ENCODE measurements at regions of chr13 and their contacts with region 1.

Region 1: DNA sequence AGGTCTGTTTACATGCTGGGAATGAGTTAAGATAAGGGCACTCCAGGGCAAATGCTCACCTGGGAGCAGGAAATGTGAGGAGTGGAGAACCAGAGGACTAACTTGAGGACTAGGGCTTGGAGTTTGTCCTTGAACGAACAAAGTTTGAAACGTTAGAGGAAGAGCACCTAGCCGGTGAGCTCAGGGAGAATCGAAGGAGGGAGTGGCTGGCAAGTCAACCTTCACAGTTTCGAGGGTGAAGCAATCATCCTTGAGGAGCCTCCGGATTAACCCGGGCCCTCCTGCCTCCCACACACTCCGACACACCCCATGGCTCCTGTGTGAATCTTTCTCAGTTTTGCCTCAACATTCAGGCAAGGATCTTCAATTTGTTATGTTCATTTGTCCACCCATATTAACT is 58.6 kb downstream of the LMO7 start:
- DNase-seq: no peak
- ATAC-seq: no peak
- H3K4me3 Mint-ChIP-seq: no peak overlapping the region
- H3K27ac Mint-ChIP-seq: no peak overlapping the region
- H3K4me1 Mint-ChIP-seq: peaks cover 2% of the 10 kb centered on the region
- H3K27me3 Mint-ChIP-seq: no peaks in the 10 kb centered on the region

Region 2: GRCh38 chr13:75675421-75675820 is 19.3 kb before region 1 on chr13:
- CTCF ChIA-PET with region 1: interaction called, 13 read pairs
- POLR2A ChIA-PET with region 1: no interaction called
- DNase-seq: no peak
- ATAC-seq: no peak
- H3K4me3 Mint-ChIP-seq: no peak overlapping the region
- H3K27ac Mint-ChIP-seq: no peak overlapping the region
- H3K4me1 Mint-ChIP-seq: no peaks in the 10 kb centered on the region
- H3K27me3 Mint-ChIP-seq: no peaks in the 10 kb centered on the region

Region 3: DNA sequence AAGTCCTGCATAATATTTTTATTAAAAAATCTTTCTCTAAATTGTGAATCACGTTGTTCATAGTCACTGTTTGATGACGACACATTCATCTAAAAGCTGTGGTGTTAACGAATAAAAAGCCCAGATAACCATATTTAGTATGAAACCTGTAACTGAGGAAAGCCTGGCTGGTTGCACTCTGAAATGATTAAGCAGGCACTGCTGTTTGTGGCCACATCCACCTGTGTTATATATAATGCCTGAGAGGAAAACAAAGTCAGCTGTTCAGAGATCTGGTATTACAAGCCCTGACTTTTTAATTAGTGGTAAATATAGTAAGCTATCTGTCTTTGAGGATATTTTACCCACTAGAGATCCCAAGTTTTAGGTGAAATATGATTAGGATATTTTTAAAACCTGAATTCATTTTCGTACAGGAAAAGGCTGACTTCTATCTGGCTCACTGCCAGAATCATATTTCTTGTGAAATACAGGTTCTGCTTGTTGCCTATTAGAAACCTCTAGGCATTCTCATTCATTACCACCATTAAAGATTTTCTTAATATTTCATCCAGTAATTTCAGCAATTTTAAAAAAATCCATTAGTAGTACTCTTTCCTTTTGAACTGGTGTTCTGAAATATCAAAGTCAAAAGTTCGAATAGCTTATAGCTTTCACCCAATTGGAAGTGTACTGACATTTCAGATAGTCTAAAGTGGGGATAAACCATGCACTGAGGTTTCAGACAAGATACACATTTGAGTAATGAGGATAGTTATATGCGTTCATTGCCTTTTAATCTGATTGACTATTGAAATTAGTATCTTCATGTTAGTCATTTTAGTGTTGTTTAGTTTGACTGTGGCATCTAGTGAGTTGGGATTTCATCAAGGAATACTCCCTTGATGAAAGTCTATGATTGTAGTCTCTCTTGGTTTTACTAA is 21.1 kb after region 1 on chr13:
- CTCF ChIA-PET with region 1: interaction called, 16 read pairs
- POLR2A ChIA-PET with region 1: no interaction called
- DNase-seq: no peak
- ATAC-seq: no peak
- H3K4me3 Mint-ChIP-seq: no peak overlapping the region
- H3K27ac Mint-ChIP-seq: no peak overlapping the region
- H3K4me1 Mint-ChIP-seq: peaks cover 2% of the 10 kb centered on the region
- H3K27me3 Mint-ChIP-seq: no peaks in the 10 kb centered on the region

Region 4: GRCh38 chr13:75769141-75769905 is 74.6 kb after region 1 on chr13:
- CTCF ChIA-PET with region 1: interaction called, 50 read pairs
- POLR2A ChIA-PET with region 1: no interaction called
- DNase-seq: no peak
- ATAC-seq: no peak
- H3K4me3 Mint-ChIP-seq: no peak overlapping the region
- H3K27ac Mint-ChIP-seq: no peak overlapping the region
- H3K4me1 Mint-ChIP-seq: peaks cover 20% of the 10 kb centered on the region
- H3K27me3 Mint-ChIP-seq: no peaks in the 10 kb centered on the region

Region 5: GRCh38 chr13:75811361-75811760 is 116.6 kb after region 1 on chr13:
- CTCF ChIA-PET with region 1: interaction called, 14 read pairs
- POLR2A ChIA-PET with region 1: no interaction called
- DNase-seq: no peak
- ATAC-seq: no peak
- H3K4me3 Mint-ChIP-seq: no peak overlapping the region
- H3K27ac Mint-ChIP-seq: no peak overlapping the region
- H3K4me1 Mint-ChIP-seq: no peaks in the 10 kb centered on the region
- H3K27me3 Mint-ChIP-seq: no peaks in the 10 kb centered on the region

Region 6: DNA sequence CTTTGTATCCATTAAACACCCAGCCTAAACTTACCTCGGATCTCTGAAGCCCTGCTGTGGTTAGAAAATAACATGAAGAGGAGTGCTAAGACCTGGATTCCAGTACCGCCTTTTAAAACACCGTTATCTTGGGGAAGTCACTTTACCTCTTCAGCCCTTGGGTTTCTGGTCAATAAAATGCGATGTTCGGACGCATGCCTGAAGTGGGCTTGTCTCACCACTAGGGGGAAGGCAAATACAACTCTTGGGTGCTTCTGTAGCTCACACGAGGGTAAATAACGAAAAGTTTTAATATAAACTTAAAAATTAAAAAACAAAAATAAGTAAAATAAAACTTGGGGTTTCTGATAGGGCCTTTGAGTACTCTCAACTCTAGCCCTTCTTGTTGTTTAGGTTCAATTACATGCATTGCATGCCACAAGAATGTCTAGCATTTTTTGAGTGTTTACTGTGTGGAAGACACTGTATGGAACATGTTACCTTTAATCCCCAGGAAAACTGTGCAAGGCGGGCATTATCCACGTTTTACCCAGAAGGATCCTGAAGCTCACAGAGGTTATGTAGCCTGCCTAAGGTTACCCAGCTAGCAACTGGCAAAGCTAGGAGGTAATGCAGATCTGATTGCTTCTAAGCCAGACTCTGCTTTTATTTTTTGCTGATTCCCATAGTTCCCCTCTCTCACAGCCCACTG is 181.8 kb after region 1 on chr13:
- CTCF ChIA-PET with region 1: interaction called, 155 read pairs
- POLR2A ChIA-PET with region 1: no interaction called
- DNase-seq: peak; percentile 75
- ATAC-seq: peak; percentile 97
- H3K4me3 Mint-ChIP-seq: peak overlapping the region; percentile 4
- H3K27ac Mint-ChIP-seq: no peak overlapping the region
- H3K4me1 Mint-ChIP-seq: peaks cover 19% of the 10 kb centered on the region
- H3K27me3 Mint-ChIP-seq: peaks cover 11% of the 10 kb centered on the region